Activated CD4-positive, alpha-beta T cell treated with anti-CD3 and anti-CD28 coated beads for 36 hours (primary cell): ENCODE measurements at regions of chr7 and their contacts with region 1.

Region 1: GRCh38 chr7:726084-726853 is at the start of gene DNAAF5:
- DNase-seq: peak; percentile 93
- ATAC-seq: peak; percentile 89
- H3K4me3 Mint-ChIP-seq: peak within 1 kb of the TSS; percentile 83
- H3K27ac Mint-ChIP-seq: peak within 1 kb of the TSS; percentile 90
- H3K4me1 Mint-ChIP-seq: peaks cover 26% of the 10 kb centered on the region
- H3K27me3 Mint-ChIP-seq: no peaks in the 10 kb centered on the region
- total RNA-seq, gene DNAAF5: 31.5 to 37.2 TPM

Region 2: GRCh38 chr7:322111-322671 is 404.1 kb before region 1 on chr7:
- CTCF ChIA-PET with region 1: interaction called, 3 read pairs
- POLR2A ChIA-PET with region 1: no interaction called
- intact Hi-C with region 1: loop called in 1 of 2 experiments (anchors 2 kb)
- DNase-seq: peak; percentile 90
- ATAC-seq: peak; percentile 99
- H3K4me3 Mint-ChIP-seq: no peak overlapping the region
- H3K27ac Mint-ChIP-seq: no peak overlapping the region
- H3K4me1 Mint-ChIP-seq: no peaks in the 10 kb centered on the region
- H3K27me3 Mint-ChIP-seq: peaks cover 14% of the 10 kb centered on the region

Region 3: GRCh38 chr7:518630-519483 is 207.4 kb before region 1 on chr7:
- CTCF ChIA-PET with region 1: no interaction called
- POLR2A ChIA-PET with region 1: no interaction called
- intact Hi-C with region 1: loop called in 1 of 2 experiments (anchors 2 kb)
- DNase-seq: peak; percentile 75
- ATAC-seq: peak; percentile 42
- H3K4me3 Mint-ChIP-seq: peak overlapping the region; percentile 73
- H3K27ac Mint-ChIP-seq: no peak overlapping the region
- H3K4me1 Mint-ChIP-seq: peaks cover 16% of the 10 kb centered on the region
- H3K27me3 Mint-ChIP-seq: peaks cover 37% of the 10 kb centered on the region

Region 4: GRCh38 chr7:621572-622285 is 104.5 kb before region 1 on chr7:
- CTCF ChIA-PET with region 1: no interaction called
- POLR2A ChIA-PET with region 1: no interaction called
- intact Hi-C with region 1: no loop called
- DNase-seq: no peak
- ATAC-seq: no peak
- H3K4me3 Mint-ChIP-seq: no peak overlapping the region
- H3K27ac Mint-ChIP-seq: no peak overlapping the region
- H3K4me1 Mint-ChIP-seq: peaks cover 39% of the 10 kb centered on the region
- H3K27me3 Mint-ChIP-seq: no peaks in the 10 kb centered on the region